ENCODE measurements at regions of chr9 and their contacts with region 1.

Region 1: DNA sequence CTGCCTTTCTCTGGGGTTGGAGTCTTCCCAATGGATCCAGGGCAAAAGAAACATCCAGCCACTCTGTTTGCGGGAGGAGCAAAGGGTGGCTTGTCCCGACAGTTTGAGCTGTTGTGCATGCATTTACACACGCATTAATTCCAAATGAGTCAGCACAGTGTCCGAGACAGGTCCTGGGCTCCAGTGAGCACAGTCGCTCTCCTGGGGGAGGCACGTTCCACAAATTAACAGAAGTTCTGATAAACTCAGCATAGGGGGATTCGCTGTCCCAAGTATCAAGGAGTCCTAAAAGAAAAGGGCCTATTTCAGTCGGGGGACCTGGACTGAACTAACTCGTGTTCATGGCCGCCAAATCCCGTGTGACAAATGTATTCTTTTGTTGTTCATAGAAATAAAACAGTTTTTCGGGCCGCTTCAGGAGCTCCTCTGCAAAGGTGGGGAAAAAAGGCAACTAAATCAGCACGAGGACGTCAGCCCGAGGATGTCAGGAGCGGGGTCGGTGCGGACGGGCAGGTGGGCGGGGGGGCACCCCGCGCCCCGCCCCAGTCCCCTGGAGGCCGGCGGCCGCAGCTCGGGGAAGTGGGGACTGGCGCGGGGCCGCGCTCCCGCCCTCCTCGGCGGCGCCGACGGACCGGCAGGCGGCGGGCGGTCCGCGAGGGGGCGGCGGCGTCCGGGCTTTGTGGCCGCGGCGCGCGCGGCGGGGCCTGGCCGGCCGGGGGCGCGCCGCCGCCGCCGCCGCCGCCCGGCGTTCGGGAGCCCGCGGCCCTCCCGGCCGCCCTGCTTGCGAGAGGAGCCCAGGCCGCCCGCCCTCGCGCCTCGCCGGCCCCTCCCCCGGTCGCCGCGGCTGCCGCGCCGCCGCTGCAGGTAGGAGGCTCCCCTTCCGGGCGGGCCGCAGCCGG is at the start of gene MSANTD3:
- DNase-seq: peak; percentile 74 to 76
- H3K4me3 ChIP-seq: peak within 1 kb of the TSS; percentile 48 to 74 (median 57)
- H3K27ac ChIP-seq: peak within 1 kb of the TSS; percentile 79 to 86 (median 83)
- H3K4me1 ChIP-seq: peaks cover 24 to 27% of the 10 kb centered on the region in 2 donors
- H3K27me3 ChIP-seq: no peaks in the 10 kb centered on the region
- CTCF ChIP-seq: peak in 3 of 6 experiments; percentile 34 to 56 (median 55)
- POLR2A ChIP-seq: peak in 1 of 2 donors; percentile 33
- total RNA-seq, gene MSANTD3: 39.2 to 48.2 (median 44.3) TPM

Region 2: DNA sequence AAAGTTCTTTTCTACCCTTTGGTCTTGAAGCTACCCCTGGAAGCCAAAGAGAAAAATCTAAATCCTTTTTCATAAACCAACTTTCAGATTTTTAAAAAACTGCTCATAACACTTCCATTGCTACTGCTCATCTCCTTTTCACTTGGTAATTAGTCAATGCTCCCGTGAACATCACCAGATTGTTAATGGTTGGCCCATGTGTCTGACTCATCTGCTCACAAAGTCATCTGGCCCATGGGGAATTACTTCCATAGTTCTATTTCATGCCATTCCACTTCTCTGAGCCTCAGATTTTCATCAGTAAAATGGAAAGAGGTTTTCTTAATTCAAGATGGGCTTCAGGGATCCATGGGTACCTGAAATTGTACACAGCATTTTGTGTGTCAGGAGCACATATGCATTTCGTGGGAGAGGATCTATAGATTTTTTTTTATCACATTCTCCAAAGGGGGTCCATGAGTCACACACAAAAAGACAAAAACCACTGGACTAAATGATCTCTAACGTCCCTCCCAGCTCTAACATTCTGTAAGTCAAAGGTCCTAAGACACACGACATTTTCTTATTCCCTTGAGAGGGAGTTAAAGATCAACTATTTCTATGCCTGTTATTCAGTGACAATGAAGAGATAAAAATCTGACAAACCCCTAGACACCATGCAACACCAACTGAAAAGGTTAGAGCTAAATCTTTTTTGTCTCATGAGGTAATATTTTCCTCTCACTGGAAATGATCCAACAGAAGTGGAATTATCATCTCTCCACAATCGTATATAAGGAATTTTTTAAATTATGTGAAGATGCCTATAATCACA is 149.4 kb before region 1 on chr9:
- intact Hi-C with region 1: no loop called
- DNase-seq: no peak
- H3K4me3 ChIP-seq: no peak overlapping the region
- H3K27ac ChIP-seq: no peak overlapping the region
- H3K4me1 ChIP-seq: no peaks in the 10 kb centered on the region
- H3K27me3 ChIP-seq: no peaks in the 10 kb centered on the region
- CTCF ChIP-seq: no peak
- POLR2A ChIP-seq: no peak

Region 3: GRCh38 chr9:100466171-100466827 is 39.5 kb after region 1 on chr9:
- intact Hi-C with region 1: loop called (anchors 5 kb)
- DNase-seq: peak; percentile 80 to 84
- H3K4me3 ChIP-seq: no peak overlapping the region
- H3K27ac ChIP-seq: peak overlapping the region; percentile 83 to 89 (median 85)
- H3K4me1 ChIP-seq: peaks cover 29 to 30% of the 10 kb centered on the region in 2 donors
- H3K27me3 ChIP-seq: no peaks in the 10 kb centered on the region
- CTCF ChIP-seq: no peak
- POLR2A ChIP-seq: no peak

Region 4: GRCh38 chr9:100492952-100493351 is 66.2 kb after region 1 on chr9:
- intact Hi-C with region 1: no loop called
- DNase-seq: peak in 1 of 2 donors; percentile 8
- H3K4me3 ChIP-seq: no peak overlapping the region
- H3K27ac ChIP-seq: no peak overlapping the region
- H3K4me1 ChIP-seq: no peaks in the 10 kb centered on the region
- H3K27me3 ChIP-seq: no peaks in the 10 kb centered on the region
- CTCF ChIP-seq: peak in 2 of 6 experiments; percentile 22 to 26
- POLR2A ChIP-seq: no peak

Region 5: GRCh38 chr9:100598641-100599145 is 171.9 kb after region 1 on chr9:
- intact Hi-C with region 1: loop called (anchors 10 kb)
- DNase-seq: peak; percentile 89 to 92
- H3K4me3 ChIP-seq: peak overlapping the region in 2 of 3 donors; percentile 16 to 25
- H3K27ac ChIP-seq: peak overlapping the region; percentile 18 to 51 (median 20)
- H3K4me1 ChIP-seq: peaks cover 0 to 4% of the 10 kb centered on the region in 2 donors
- H3K27me3 ChIP-seq: no peaks in the 10 kb centered on the region
- CTCF ChIP-seq: no peak
- POLR2A ChIP-seq: peak in 1 of 2 donors; percentile 39